ENCODE measurements at regions of chr6 and their contacts with region 1.

Region 1: GRCh38 chr6:143337201-143337949 is 113.1 kb downstream of the ADAT2 start:
- DNase-seq: no peak
- ATAC-seq: peak; percentile 98
- H3K4me3 ChIP-seq: no peak overlapping the region
- H3K27ac ChIP-seq: no peak overlapping the region
- H3K4me1 ChIP-seq: no peaks in the 10 kb centered on the region
- H3K27me3 ChIP-seq: no peaks in the 10 kb centered on the region
- CTCF ChIP-seq: peak; percentile 60 to 83 (median 66)
- EP300 ChIP-seq: no peak
- POLR2A ChIP-seq: no peak
- RAD21 ChIP-seq: peak; percentile 33

Region 2: DNA sequence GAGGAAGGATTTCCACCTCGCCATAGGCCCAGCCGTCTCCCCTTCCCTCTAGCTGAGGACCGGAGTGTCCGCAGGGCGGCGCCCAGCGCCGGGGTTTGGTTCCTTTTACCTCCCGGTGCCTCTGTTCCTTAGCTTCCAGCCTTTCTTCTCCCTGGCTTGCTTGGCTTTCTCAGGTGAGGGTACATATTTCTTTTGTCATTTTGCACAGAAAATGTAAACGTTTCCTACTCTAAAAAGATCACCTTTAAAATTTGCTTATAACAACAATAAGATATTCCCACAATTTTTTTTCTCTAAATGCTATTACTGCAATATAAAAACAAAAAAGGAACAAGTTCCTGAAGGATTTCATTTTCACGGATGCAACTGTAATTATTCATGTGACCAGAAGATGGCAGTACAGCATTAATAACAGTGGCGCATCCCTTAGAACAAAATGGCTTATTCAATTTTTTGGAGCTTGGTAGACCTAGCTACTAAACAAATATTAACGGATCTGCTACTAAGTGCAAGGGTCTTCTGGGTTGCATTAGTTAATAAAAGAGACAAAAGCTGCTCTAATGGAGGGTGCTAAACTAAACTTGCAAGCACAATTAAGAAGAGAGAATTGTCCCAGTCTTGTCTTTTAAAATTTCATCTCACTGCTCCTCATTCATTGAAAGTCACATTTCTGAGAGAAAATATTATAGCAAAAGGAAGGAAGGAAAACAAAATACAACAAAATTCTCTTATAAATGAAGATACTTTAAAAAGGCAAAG is 862.7 kb before region 1 on chr6:
- CTCF ChIA-PET with region 1: interaction called, 19 read pairs
- POLR2A ChIA-PET with region 1: no interaction called
- RAD21 ChIA-PET with region 1: interaction called, 11 read pairs
- SMC1A ChIA-PET with region 1: interaction called, 8 read pairs
- in situ Hi-C with region 1: no loop called
- intact Hi-C with region 1: loop called (anchors 2 kb)
- DNase-seq: no peak
- ATAC-seq: peak; percentile 69
- H3K4me3 ChIP-seq: no peak overlapping the region
- H3K27ac ChIP-seq: no peak overlapping the region
- H3K4me1 ChIP-seq: no peaks in the 10 kb centered on the region
- H3K27me3 ChIP-seq: no peaks in the 10 kb centered on the region; a peak in 1 of 4 replicates
- CTCF ChIP-seq: peak; percentile 53 to 79 (median 64); a peak in 5 of 6 replicates
- EP300 ChIP-seq: no peak
- POLR2A ChIP-seq: no peak
- RAD21 ChIP-seq: peak; percentile 89

Region 3: GRCh38 chr6:142566628-142567396 is 770.6 kb before region 1 on chr6:
- CTCF ChIA-PET with region 1: interaction called, 11 read pairs
- POLR2A ChIA-PET with region 1: no interaction called
- RAD21 ChIA-PET with region 1: interaction called, 4 read pairs
- SMC1A ChIA-PET with region 1: interaction called, 3 read pairs
- in situ Hi-C with region 1: no loop called
- intact Hi-C with region 1: loop called (anchors 10 kb)
- DNase-seq: peak; percentile 11
- ATAC-seq: peak; percentile 81
- H3K4me3 ChIP-seq: no peak overlapping the region
- H3K27ac ChIP-seq: no peak overlapping the region
- H3K4me1 ChIP-seq: no peaks in the 10 kb centered on the region
- H3K27me3 ChIP-seq: no peaks in the 10 kb centered on the region
- CTCF ChIP-seq: peak; percentile 85 to 92 (median 91)
- EP300 ChIP-seq: no peak
- POLR2A ChIP-seq: no peak
- RAD21 ChIP-seq: peak; percentile 83

Region 4: GRCh38 chr6:142702501-142703460 is 634.6 kb before region 1 on chr6:
- CTCF ChIA-PET with region 1: interaction called, 10 read pairs
- POLR2A ChIA-PET with region 1: no interaction called
- RAD21 ChIA-PET with region 1: interaction called, 3 read pairs
- SMC1A ChIA-PET with region 1: interaction called, 3 read pairs
- in situ Hi-C with region 1: no loop called
- intact Hi-C with region 1: no loop called
- DNase-seq: no peak
- ATAC-seq: peak; percentile 53
- H3K4me3 ChIP-seq: no peak overlapping the region
- H3K27ac ChIP-seq: no peak overlapping the region; the same call in 1 of the 2 replicates
- H3K4me1 ChIP-seq: peaks cover 14% of the 10 kb centered on the region
- H3K27me3 ChIP-seq: no peaks in the 10 kb centered on the region
- CTCF ChIP-seq: no peak
- EP300 ChIP-seq: no peak
- POLR2A ChIP-seq: no peak
- RAD21 ChIP-seq: no peak

Region 5: DNA sequence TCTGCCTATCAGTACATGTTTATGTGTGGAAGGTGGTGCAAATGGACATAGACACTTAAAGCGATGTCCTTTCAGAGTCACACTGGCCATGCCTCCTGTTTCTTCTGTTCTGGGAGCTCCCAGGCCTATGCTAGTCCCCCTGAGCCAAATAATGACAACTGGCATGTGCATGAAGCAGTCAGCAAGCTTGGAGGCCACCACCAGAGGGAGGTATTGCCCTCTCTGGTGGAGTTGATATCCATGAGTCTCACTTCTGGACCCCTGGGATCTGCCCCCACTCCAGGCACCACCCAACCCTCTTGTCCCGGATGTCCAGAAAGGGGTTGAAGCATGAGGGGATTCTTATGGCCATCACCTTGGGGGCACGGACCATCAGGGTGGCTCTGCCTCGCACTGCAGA is 104.5 kb before region 1 on chr6:
- CTCF ChIA-PET with region 1: interaction called, 31 read pairs
- POLR2A ChIA-PET with region 1: interaction called, 3 read pairs
- RAD21 ChIA-PET with region 1: interaction called, 11 read pairs
- SMC1A ChIA-PET with region 1: interaction called, 22 read pairs
- in situ Hi-C with region 1: no loop called
- intact Hi-C with region 1: loop called (anchors 1 kb)
- DNase-seq: peak; percentile 2
- ATAC-seq: peak; percentile 89
- H3K4me3 ChIP-seq: no peak overlapping the region
- H3K27ac ChIP-seq: no peak overlapping the region
- H3K4me1 ChIP-seq: no peaks in the 10 kb centered on the region
- H3K27me3 ChIP-seq: no peaks in the 10 kb centered on the region
- CTCF ChIP-seq: peak; percentile 62 to 70 (median 67)
- EP300 ChIP-seq: no peak
- POLR2A ChIP-seq: no peak
- RAD21 ChIP-seq: peak; percentile 82

Region 6: DNA sequence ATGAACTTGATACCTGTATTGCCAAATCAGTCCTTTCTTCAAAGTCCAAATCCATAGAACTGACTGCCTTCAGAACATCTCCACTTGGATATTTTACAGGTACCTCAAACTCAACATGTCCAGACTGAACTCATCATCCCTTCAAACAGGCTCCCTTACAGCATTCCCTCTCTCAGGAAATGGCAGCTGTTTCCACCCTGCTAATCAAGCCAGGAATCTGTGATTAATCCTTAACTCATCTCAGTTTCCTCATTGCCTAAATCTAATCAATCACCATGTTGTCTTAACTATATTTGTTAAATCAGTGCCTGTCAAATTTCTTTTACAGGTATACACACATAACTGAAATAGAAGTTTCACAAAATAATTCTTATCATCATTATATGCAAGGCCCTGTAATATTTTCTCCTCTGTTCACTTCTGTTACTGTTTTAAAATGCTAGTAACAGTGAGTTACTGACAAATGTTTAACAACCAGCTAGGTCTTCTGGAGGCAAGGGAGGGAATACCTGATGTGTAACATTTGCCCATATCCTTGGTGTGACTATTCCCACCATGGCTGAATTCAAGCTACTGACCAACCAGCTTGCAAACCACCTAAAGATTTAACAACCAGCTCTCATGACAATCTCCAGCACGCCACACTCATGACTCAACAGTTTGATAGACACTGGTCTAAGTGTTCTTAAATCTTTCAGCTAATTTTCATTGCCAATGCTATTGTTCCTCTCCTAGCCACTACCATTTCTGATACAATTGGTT is 11.8 kb before region 1 on chr6:
- CTCF ChIA-PET with region 1: interaction called, 10 read pairs
- POLR2A ChIA-PET with region 1: no interaction called
- RAD21 ChIA-PET with region 1: no interaction called
- SMC1A ChIA-PET with region 1: interaction called, 3 read pairs
- in situ Hi-C with region 1: no loop called
- intact Hi-C with region 1: no loop called
- DNase-seq: no peak
- ATAC-seq: no peak
- H3K4me3 ChIP-seq: no peak overlapping the region
- H3K27ac ChIP-seq: no peak overlapping the region
- H3K4me1 ChIP-seq: no peaks in the 10 kb centered on the region
- H3K27me3 ChIP-seq: no peaks in the 10 kb centered on the region
- CTCF ChIP-seq: no peak
- EP300 ChIP-seq: no peak
- POLR2A ChIP-seq: no peak
- RAD21 ChIP-seq: no peak

Region 7: GRCh38 chr6:143478479-143479062 is 141.2 kb after region 1 on chr6:
- CTCF ChIA-PET with region 1: no interaction called
- POLR2A ChIA-PET with region 1: no interaction called
- RAD21 ChIA-PET with region 1: no interaction called
- SMC1A ChIA-PET with region 1: no interaction called
- in situ Hi-C with region 1: no loop called
- intact Hi-C with region 1: no loop called
- DNase-seq: no peak
- ATAC-seq: peak; percentile 65
- H3K4me3 ChIP-seq: no peak overlapping the region
- H3K27ac ChIP-seq: no peak overlapping the region
- H3K4me1 ChIP-seq: peaks cover 4% of the 10 kb centered on the region; the same call in 1 of the 2 replicates
- H3K27me3 ChIP-seq: no peaks in the 10 kb centered on the region
- CTCF ChIP-seq: no peak
- EP300 ChIP-seq: no peak
- POLR2A ChIP-seq: no peak
- RAD21 ChIP-seq: no peak

Region 8: DNA sequence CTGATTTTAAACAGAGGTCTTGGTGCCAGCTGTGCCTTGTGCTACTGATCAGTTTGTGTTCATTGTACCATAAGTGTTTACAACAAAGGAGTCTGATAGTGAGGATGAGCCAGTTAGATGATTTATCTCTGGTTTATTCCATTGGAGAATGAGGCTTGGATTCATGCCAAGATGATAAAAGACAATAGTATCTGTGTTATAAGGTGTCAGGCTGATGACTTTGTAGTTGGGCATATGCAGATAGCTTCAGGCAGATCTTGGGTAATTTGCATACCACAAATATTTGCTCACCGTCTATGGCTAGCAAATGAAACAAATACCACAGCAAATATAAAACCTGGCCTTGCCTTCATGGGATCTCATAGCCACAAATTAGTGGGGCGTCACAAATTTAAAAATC is 297.1 kb after region 1 on chr6:
- CTCF ChIA-PET with region 1: no interaction called
- POLR2A ChIA-PET with region 1: no interaction called
- RAD21 ChIA-PET with region 1: no interaction called
- SMC1A ChIA-PET with region 1: no interaction called
- in situ Hi-C with region 1: no loop called
- intact Hi-C with region 1: no loop called
- DNase-seq: no peak
- ATAC-seq: 0 out of 3 replicates have a peak, but pooled peaks have one; percentile 22
- H3K4me3 ChIP-seq: no peak overlapping the region
- H3K27ac ChIP-seq: no peak overlapping the region
- H3K4me1 ChIP-seq: no peaks in the 10 kb centered on the region
- H3K27me3 ChIP-seq: no peaks in the 10 kb centered on the region
- CTCF ChIP-seq: no peak
- EP300 ChIP-seq: no peak
- POLR2A ChIP-seq: no peak
- RAD21 ChIP-seq: no peak